ENCODE measurements at regions of chr1 and their contacts with region 1.

Region 1: DNA sequence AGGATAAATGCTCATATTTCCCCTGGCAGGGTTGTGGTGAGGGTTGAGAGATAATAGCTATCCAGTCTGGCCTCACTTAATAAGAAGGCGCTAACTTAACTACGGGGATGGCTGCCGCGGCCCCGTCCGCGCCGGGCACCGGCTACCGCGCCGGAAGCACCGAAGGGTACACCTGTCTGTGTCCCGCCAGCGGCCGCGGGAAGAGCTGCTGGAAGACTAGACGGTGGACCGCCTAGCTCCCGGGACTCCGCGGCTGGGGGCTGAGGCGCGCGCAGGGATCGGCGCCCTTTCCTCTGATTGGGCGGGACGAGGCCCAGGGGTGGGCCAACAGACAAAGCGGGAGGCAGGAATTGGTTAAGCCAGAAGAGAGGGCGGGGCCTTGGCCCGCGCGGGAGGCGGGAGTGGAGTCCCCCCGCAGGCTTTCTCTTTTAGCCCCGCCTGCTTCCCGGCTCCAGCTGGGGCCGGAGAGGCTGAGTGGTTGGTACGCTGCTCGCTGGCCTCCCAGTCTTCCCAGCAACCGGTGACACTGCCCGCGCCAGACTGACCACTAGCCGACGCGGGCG is at the start of gene ZNF672:
- H3K4me3 Mint-ChIP-seq: no peak within 1 kb of the TSS
- H3K27ac Mint-ChIP-seq: no peak within 1 kb of the TSS
- H3K4me1 Mint-ChIP-seq: peaks cover 36% of the 10 kb centered on the region
- H3K27me3 Mint-ChIP-seq: no peaks in the 10 kb centered on the region

Region 2: DNA sequence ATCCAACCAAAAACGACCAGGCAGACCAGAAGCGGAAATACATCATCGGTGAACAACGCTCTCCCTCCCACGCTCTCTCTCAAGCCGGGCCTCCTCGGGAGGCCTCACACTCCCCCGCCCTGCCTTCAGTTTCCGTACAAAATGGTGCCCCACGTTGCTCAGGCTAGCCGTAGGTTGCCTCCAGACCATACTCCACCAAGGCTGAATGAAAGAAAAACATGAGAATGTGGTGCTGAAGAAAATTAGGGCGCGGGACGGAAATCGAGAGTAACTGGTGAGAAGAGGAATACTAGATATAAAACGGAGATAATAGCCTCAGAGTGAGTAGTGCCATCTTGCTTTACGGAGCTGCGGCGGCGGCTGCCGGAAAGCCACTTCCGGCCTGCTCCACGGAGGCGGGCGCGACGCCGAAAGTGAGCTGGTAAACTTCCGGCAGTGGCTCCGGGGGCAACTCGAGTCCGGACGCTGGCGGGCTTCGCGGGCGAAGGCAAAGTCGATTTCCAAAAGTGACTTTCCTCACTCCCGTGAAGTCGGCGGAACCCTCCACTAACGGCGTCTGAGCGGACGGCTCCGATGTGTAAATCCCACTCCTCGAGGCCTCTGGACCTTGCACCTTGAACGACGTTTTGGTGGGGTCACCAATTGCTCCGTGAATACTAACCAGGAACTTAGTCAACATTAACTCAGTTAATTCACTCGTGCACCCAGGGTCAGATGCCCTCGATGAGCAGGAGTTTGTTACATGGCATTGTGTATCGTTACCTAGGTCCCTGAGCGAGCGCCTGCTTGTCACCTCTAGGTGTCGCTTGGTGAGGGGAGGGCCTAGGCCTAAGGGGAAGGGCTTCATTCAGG is 11.7 kb before region 1 on chr1 and contains the start of gene SH3BP5L:
- intact Hi-C with region 1: loop called (anchors 1 kb)
- H3K4me3 Mint-ChIP-seq: peak within 1 kb of the TSS; percentile 88
- H3K27ac Mint-ChIP-seq: peak within 1 kb of the TSS; percentile 99
- H3K4me1 Mint-ChIP-seq: peaks cover 69% of the 10 kb centered on the region
- H3K27me3 Mint-ChIP-seq: no peaks in the 10 kb centered on the region

Region 3: DNA sequence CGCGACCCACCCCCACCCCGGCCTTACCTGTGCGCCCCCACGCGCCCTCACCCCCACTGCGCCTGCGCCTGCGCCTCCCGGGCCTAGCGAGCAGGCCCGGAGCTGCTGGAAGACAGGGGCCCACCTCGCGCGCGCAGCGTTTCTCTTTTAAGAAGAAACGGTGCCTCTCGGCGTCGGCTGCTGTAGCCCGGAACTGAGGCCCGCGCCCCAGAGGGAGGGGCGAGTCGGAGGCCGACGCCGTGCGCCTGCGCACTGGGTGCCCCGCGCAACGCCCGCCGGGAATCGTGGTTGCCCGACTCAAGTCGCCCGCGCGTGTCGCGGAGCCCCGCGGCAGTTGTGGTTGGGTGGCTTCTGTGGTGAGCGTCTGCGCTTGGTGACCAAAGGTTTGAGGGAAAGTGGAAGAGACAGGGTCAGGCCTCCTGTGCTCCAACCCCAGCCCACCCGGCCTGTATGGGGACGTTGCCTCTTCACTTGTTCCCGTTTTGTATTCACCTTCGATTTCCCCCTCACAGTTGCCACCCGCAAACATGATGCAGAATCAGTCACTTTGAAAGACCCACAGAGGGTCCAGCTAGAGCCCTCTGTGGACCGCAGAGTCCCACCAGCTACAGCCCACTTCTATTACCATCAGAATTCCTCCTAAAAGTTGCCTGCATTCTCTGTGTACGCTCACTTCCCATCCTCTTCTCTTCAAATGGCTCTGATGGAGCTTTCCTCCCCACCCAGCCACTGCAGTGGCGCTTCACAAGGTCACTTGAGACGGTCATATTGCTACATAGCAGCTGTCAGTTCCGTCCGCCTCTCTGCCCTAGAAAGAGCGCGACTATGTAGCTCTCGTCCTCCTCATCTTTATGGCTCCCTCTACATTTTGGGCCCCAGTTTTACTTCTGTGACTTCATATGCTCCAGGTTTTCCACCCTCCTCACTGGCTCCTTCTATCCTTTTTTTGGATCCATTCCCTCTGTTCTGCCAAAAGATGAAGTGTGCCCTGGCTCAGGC is 21.3 kb after region 1 on chr1 and contains the start of gene ZNF692:
- intact Hi-C with region 1: loop called (anchors 1 kb)
- H3K4me3 Mint-ChIP-seq: peak within 1 kb of the TSS; percentile 86
- H3K27ac Mint-ChIP-seq: peak within 1 kb of the TSS; percentile 95
- H3K4me1 Mint-ChIP-seq: peaks cover 67% of the 10 kb centered on the region
- H3K27me3 Mint-ChIP-seq: no peaks in the 10 kb centered on the region

Region 4: GRCh38 chr1:248873409-248873992 is 35.6 kb after region 1 on chr1:
- intact Hi-C with region 1: loop called (anchors 1 kb)
- H3K4me3 Mint-ChIP-seq: peak overlapping the region; percentile 82
- H3K27ac Mint-ChIP-seq: peak overlapping the region; percentile 89
- H3K4me1 Mint-ChIP-seq: peaks cover 18% of the 10 kb centered on the region
- H3K27me3 Mint-ChIP-seq: no peaks in the 10 kb centered on the region

Region 5: DNA sequence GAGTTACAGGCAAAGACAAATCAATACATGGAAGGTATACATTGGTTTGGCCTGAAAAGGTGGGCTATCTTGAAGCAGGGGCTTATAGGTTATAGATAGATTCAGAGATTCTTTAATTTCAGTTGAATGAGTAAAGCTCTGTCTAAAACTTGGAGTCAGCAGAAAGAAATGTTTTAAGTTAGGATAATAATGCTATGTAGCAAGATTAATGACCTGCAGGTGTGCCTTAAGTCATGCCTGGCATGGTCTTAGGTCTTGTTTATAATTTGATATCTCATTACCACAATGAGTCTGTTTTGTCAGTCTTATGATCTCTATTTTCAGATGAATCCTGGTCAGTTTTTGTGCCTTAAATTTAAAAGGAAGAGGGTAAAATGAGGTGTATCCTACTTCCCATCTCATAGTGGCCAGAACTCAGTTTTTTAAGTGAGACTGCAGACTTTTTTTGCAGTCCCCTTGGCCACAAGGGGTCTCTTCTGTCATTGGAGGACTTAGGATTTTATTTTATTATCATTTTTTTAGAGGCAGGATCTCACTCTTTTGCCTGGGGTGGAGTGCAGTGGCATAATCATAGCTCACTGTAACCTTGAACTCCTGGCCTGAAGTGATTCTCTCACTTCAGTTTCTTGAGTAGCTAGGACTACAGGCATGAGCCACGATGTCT is 46.9 kb after region 1 on chr1:
- intact Hi-C with region 1: no loop called
- H3K4me3 Mint-ChIP-seq: no peak overlapping the region
- H3K27ac Mint-ChIP-seq: no peak overlapping the region
- H3K4me1 Mint-ChIP-seq: peaks cover 5% of the 10 kb centered on the region
- H3K27me3 Mint-ChIP-seq: no peaks in the 10 kb centered on the region

Region 6: GRCh38 chr1:248906009-248906752 is 68.3 kb after region 1 on chr1 and contains the start of gene PGBD2:
- intact Hi-C with region 1: loop called (anchors 2 kb)
- H3K4me3 Mint-ChIP-seq: peak within 1 kb of the TSS; percentile 93
- H3K27ac Mint-ChIP-seq: peak within 1 kb of the TSS; percentile 96
- H3K4me1 Mint-ChIP-seq: peaks cover 33% of the 10 kb centered on the region
- H3K27me3 Mint-ChIP-seq: peaks cover 2% of the 10 kb centered on the region